ENCODE measurements at regions of chr10 and their contacts with region 1.

Region 1: DNA sequence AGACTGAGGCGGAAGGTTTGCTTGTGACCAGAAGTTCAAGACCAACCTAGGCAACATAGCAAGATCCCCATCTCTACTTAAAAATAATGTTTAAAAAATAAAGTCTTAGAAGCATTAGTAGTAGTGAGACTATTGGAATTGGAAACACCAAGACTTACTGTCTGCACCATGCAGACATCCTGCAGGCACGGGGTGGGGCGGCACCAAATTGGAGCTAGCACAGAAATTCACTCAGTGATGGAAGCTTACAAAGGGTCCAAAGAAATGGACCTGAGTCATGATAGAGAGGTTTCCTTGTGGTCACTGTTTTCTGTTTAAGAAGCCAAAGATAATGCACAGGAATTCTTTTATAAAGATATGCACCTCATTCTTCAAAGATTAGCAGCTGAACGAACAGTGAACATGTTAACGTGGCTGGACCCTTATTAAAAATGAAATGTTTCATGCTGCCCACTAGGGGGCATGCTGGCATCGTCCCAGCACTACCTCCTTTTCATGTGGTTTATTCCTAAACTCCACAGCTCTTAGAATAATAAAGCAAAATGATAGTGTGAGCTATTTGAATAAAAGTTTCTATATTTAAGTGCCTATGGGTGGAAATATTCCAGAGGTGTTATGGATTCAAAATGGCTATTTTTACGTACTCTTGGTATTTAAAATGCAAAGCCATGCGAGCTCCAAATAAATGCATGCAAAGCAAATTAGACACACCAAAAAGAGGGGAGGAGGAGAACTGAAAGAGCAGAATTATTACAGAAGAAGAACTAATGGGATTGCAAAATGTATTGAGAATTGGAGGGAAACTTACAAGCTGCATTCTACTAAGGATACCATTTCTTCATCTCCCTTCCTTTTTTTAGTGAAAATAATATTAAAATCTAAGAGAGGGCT is 28.6 kb downstream of the PDSS1 start:
- DNase-seq: peak; percentile 44 to 70 (median 68)
- ATAC-seq: peak; percentile 60
- H3K4me3 ChIP-seq: no peak overlapping the region
- H3K27ac ChIP-seq: no peak overlapping the region
- H3K4me1 ChIP-seq: no peaks in the 10 kb centered on the region
- H3K27me3 ChIP-seq: no peaks in the 10 kb centered on the region
- CTCF ChIP-seq: peak; percentile 61 to 89 (median 74)
- POLR2A ChIP-seq: no peak

Region 2: DNA sequence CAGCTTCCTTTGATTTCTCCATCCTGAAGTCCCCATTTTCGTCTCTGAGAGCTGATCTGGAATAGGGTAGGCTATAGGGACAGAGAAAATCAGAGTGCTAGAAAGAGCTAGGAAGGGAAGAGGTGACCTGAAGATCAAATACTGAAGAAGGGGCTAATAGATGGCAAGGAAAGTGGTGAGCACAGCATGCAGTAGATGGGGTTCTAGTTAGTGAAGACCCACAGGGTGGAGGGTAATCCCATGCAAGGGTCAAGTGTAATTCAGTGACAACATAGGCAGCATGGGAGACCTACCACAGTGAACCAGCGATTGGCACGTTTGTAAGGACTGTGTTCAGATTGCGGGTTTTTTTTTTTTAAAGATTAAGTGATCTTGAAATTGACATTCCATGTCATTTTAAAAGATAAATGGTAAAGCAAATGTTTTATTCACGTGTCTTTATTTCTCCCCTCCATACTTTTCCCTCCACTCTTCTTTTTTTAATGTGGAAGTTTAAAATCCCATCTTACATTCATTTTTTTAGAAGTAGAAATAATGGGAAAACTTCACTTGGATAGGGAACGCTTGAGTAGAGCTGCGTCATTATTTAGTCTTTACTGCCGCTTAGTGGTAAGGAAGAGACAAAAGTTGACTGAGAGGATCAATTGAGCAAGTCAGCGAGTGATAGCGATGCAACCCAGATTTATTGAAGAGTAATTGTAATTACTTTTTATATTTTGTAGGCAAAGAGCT is 155.7 kb after region 1 on chr10:
- intact Hi-C with region 1: loop called (anchors 5 kb)
- DNase-seq: peak in 1 of 4 donors; percentile 30
- ATAC-seq: peak; percentile 82
- H3K4me3 ChIP-seq: no peak overlapping the region
- H3K27ac ChIP-seq: no peak overlapping the region
- H3K4me1 ChIP-seq: peaks cover 8% of the 10 kb centered on the region
- H3K27me3 ChIP-seq: peaks cover 0 to 4% of the 10 kb centered on the region in 2 donors
- CTCF ChIP-seq: peak; percentile 19 to 88 (median 86)
- POLR2A ChIP-seq: no peak

Region 3: DNA sequence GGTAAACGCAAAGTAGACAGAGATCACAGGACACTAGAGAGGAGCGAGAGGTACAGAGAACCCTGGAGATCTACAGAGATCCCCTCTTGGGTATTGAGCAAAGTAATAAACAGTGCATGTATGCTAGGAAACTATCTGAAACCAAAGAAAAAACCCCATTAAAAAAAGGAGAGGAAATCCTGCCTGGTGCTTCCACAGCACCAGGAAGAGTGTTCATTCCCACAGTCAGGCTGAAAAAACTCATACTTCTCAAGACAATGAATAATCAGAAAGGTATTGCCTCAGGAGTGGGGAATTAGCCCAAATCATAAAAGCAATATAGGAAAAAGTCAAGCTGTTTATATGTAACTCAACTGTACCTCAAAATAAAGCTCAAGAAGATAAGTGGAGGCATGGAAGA is 315.1 kb after region 1 on chr10:
- intact Hi-C with region 1: no loop called
- DNase-seq: no peak
- ATAC-seq: no peak
- H3K4me3 ChIP-seq: no peak overlapping the region
- H3K27ac ChIP-seq: no peak overlapping the region
- H3K4me1 ChIP-seq: no peaks in the 10 kb centered on the region
- H3K27me3 ChIP-seq: no peaks in the 10 kb centered on the region
- CTCF ChIP-seq: no peak
- POLR2A ChIP-seq: no peak

Region 4: GRCh38 chr10:27065084-27065483 is 339.0 kb after region 1 on chr10:
- intact Hi-C with region 1: no loop called
- DNase-seq: no peak
- ATAC-seq: no peak
- H3K4me3 ChIP-seq: no peak overlapping the region
- H3K27ac ChIP-seq: no peak overlapping the region
- H3K4me1 ChIP-seq: no peaks in the 10 kb centered on the region
- H3K27me3 ChIP-seq: no peaks in the 10 kb centered on the region
- CTCF ChIP-seq: no peak
- POLR2A ChIP-seq: no peak

Measured in body of pancreas (tissue), 4 donors.